ENCODE measurements at regions of chr17 and their contacts with region 1.

Region 1: DNA sequence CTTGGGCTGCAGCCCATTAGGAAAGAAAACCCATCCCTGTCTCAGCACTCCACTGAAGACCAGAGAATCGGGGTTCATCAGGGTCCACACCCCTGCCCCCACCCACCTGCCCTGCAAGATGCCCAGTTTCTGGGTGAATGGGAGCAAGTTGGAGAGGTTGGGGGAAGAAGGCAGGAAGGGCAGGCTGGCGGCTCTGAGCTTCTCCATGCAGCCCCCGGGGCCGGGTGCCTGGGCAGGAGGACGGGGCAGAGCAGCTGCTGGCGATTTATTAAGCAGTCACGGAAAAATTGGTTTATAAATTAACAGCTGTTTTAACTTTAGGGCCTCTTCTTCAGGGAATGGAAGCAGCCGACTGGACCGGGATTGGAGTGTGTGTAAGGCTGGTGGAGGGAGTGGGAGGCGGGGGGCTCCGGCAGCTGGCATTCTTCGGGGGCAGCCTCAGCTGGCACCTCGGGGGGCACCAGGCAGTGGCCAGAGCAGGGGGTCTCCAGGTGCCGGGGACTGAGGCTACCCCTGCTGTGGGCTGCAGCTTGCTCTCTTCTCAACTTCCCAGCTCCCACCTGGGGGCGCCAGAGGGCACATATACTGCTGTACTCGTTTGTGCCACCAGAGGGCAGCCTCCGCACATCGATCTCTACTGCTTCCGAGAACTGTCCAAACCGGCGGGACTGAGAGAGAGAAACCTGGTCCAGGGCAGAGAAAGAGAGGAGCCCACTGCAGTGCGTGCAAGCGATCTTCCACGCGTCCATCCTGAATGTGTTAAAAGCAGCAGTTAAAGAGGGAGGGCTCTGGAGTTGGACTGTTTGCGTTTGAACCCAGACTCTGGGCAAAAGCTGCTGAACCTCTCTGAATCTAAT is 5.0 kb upstream of the PPP1R1B start:
- DNase-seq: peak; percentile 89
- H3K4me3 Mint-ChIP-seq: peak overlapping the region; percentile 55
- H3K27ac Mint-ChIP-seq: no peak overlapping the region
- H3K4me1 Mint-ChIP-seq: peaks cover 26% of the 10 kb centered on the region
- H3K27me3 Mint-ChIP-seq: peaks cover 91% of the 10 kb centered on the region

Region 2: DNA sequence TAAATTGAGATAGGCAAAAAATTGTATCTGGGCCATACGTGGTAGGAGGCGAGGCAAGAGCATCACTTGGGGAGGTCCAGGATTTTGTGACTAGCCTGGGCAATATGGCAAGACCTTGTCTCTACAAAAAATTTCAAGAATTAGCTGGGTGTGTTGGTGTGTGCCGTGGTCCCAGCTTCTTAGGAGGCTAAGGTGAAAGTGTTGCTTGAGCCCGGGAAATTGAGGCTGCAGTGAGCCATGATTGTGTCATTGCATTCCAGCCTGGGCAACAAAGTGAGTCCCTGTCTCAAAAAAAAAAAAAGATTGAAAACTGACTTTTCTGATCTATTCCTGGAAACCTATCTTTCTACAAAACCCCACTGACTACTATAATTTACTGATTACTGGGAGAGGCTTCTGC is 133.8 kb before region 1 on chr17:
- CTCF ChIA-PET with region 1: no interaction called
- DNase-seq: no peak
- H3K4me3 Mint-ChIP-seq: no peak overlapping the region
- H3K27ac Mint-ChIP-seq: no peak overlapping the region
- H3K4me1 Mint-ChIP-seq: peaks cover 2% of the 10 kb centered on the region
- H3K27me3 Mint-ChIP-seq: no peaks in the 10 kb centered on the region

Region 3: DNA sequence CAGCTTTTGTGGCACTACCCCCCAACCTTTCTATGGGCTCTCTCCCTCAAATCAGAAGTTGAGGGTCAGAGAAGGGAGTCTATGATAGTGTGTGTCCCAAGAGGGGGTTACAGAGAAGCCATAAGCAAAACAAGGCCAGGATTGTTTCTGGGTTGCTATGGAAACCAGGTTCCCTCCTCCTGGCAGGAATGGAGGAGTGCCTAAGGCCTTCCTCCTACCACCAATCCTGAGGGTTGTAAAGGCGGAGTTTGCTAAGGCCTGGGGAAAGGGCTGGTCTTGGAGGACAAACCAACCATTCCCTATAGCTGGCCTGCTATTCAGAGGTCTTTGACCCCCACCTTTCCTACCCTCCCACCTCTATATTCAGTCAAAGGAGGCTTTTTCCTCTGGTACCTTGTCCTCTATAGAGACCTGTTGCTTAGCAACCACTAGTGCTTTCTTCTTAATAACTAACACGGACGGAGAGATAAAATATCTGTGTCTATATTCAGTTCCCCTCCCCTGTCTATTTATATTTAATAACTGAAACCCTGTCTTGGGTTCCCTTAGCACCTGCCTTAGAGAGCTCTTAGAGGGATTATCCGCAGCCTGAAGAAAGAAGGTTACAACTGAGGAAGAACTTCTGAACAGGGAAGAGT is 57.4 kb before region 1 on chr17:
- CTCF ChIA-PET with region 1: interaction called, 14 read pairs
- DNase-seq: no peak
- H3K4me3 Mint-ChIP-seq: no peak overlapping the region
- H3K27ac Mint-ChIP-seq: no peak overlapping the region
- H3K4me1 Mint-ChIP-seq: no peaks in the 10 kb centered on the region
- H3K27me3 Mint-ChIP-seq: no peaks in the 10 kb centered on the region

Region 4: GRCh38 chr17:39668199-39668966 is 46.6 kb after region 1 on chr17 and contains the start of gene PNMT:
- CTCF ChIA-PET with region 1: interaction called, 115 read pairs
- DNase-seq: peak; percentile 79
- H3K4me3 Mint-ChIP-seq: peak within 1 kb of the TSS; percentile 46
- H3K27ac Mint-ChIP-seq: no peak within 1 kb of the TSS
- H3K4me1 Mint-ChIP-seq: peaks cover 14% of the 10 kb centered on the region
- H3K27me3 Mint-ChIP-seq: peaks cover 86% of the 10 kb centered on the region

Region 5: DNA sequence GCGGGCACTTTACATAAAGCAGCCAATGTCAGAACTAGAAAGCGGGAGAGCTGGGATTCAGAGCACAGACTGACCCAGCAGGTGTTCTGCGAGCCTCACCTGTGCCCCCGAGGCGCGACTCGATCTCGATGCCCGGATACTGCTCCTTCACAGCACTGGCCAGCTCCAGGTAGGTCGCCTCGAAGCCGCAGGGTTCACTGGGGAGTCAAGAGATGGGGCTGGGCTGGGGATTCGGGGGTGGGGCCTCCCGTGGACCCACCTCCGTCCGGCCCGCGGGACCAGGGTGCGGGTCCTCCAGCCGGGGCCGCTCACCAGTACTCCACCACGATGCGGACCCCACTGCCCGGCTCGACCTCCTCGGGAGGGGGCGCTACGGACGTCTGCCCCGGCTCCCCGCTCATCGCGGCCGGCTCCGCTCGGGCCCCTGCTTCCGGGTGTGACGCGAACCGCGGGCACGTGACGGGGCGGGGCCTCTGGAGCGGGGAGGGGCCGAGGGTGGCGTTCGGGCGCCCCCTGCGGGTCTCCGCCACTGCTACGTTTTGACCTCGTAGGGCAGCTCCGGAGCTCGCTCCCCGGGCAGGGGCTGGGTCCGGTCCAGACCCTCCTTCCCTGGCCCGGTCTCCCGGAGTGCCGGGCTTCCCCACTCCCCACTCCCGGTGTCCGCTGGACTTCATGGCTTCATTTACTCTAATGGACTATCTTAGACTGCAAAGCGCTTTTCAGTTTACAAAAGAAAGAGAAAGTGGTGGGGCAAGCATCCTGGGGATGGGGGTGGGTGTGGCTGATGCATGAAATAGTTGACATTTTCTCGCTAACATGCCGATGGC is 108.6 kb after region 1 on chr17 and contains the start of gene MIEN1:
- CTCF ChIA-PET with region 1: interaction called, 30 read pairs
- DNase-seq: peak; percentile 94
- H3K4me3 Mint-ChIP-seq: peak within 1 kb of the TSS; percentile 91
- H3K27ac Mint-ChIP-seq: peak within 1 kb of the TSS; percentile 91
- H3K4me1 Mint-ChIP-seq: peaks cover 23% of the 10 kb centered on the region
- H3K27me3 Mint-ChIP-seq: peaks cover 25% of the 10 kb centered on the region

Region 6: GRCh38 chr17:39863918-39864746 is 242.4 kb after region 1 on chr17 and contains the start of gene IKZF3:
- CTCF ChIA-PET with region 1: interaction called, 13 read pairs
- DNase-seq: peak; percentile 83
- H3K4me3 Mint-ChIP-seq: peak within 1 kb of the TSS; percentile 93
- H3K27ac Mint-ChIP-seq: peak within 1 kb of the TSS; percentile 88
- H3K4me1 Mint-ChIP-seq: peaks cover 84% of the 10 kb centered on the region
- H3K27me3 Mint-ChIP-seq: peaks cover 21% of the 10 kb centered on the region

Measured in activated naive CD4-positive, alpha-beta T cell treated with anti-CD3 and anti-CD28 coated beads, Interleukin-2, amount 10 ng/mL, durations not matched to agents 7 days and 5 days (primary cell).